Activated CD4-positive, alpha-beta T cell treated with anti-CD3 and anti-CD28 coated beads for 36 hours (primary cell): ENCODE measurements at regions of chr17 and their contacts with region 1.

Region 1: DNA sequence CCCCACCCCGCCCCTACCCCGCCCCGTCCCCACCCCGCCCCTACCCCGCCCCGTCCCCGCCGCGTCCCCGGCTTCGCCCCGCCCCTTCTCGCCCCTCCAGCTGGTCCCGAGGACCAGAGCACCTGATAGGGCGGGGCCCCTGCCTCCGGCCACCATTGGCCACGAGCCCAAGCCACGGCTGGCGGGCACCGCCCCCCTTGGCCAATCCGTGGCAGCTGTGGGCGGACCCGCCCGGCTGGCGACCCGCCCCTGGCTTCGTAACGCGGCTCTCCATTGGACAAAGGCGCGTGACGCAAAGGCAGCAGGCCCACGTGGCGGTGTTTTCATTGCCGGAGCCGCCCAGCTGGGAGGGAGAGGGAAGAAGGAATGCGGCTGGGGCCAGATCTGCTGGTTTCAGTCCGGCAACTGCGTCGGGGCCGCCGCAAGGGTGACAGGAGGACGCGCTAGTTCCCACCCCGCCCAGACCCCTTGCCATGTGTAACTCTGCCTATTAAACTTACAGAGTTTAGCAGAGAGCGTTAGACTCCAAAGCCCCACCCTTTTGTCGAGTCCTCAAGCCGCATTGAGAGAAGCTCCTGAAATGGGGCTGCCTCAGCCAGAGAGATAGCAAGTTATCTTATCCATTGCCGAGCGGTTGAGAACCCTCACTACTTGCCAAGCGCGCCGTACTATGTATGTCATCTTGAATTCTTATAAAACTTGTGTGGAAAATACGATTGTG is 403 bp upstream of the WIPI1 start:
- DNase-seq: peak; percentile 99
- ATAC-seq: peak; percentile 87
- H3K4me3 Mint-ChIP-seq: peak overlapping the region; percentile 64
- H3K27ac Mint-ChIP-seq: peak overlapping the region; percentile 64
- H3K4me1 Mint-ChIP-seq: peaks cover 61% of the 10 kb centered on the region
- H3K27me3 Mint-ChIP-seq: no peaks in the 10 kb centered on the region

Region 2: DNA sequence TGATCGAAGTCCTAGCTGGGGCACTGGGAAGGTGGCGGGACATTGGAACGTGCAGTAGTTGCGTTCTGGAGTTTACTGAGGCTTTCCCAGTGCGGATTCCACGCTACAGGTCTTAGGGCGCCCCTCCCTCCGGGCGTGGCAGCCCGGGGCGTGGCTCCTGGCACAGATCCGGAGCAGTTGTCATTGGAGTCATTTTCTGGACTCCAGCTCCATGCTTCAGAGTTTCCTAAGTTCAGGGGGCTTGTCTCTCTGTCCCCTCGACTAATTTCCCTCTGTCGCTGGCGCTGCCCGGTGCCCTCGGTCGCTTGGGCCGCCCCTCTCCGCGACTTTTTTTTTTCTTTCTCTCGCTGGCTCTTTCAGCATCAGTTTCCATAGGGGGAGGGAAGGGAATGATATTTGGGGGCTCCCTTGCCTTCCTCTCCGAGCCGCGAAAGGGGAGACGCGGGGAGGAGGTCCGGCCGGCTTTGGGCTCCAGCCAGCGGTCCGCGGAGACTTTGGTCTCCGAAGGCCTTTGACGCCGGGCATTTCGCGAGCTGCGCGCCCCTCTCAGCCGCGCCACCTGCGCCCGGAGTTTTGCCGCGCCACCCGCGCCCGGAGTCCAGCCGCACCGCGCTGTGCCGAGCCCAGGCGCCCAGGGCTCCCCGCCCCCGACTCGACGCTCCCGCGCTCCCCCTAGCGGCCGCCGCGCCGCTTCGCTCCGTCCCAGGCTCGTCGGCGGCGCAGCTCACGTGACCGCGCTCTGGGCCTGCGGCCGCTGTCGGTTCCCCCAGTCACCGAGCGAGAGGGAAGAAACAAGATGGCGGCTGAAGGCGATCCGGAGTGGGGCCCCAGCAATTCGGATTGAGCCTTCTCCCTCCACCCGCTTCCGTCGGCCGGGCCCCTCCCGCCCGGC is 632.7 kb before region 1 on chr17 and contains the start of gene BPTF:
- CTCF ChIA-PET with region 1: no interaction called
- POLR2A ChIA-PET with region 1: no interaction called
- intact Hi-C with region 1: loop called in 1 of 2 experiments (anchors 5 kb)
- DNase-seq: peak; percentile 95
- ATAC-seq: peak; percentile 88
- H3K4me3 Mint-ChIP-seq: peak within 1 kb of the TSS; percentile 99
- H3K27ac Mint-ChIP-seq: peak within 1 kb of the TSS; percentile 98
- H3K4me1 Mint-ChIP-seq: peaks cover 26% of the 10 kb centered on the region
- H3K27me3 Mint-ChIP-seq: peaks cover 5% of the 10 kb centered on the region
- total RNA-seq, gene BPTF: 77.6 to 109 TPM

Region 3: GRCh38 chr17:68057531-68057952 is 400.2 kb before region 1 on chr17:
- CTCF ChIA-PET with region 1: no interaction called
- POLR2A ChIA-PET with region 1: no interaction called
- intact Hi-C with region 1: loop called in 1 of 2 experiments (anchors 5 kb)
- DNase-seq: peak; percentile 62
- ATAC-seq: peak; percentile 88
- H3K4me3 Mint-ChIP-seq: no peak overlapping the region
- H3K27ac Mint-ChIP-seq: no peak overlapping the region
- H3K4me1 Mint-ChIP-seq: no peaks in the 10 kb centered on the region
- H3K27me3 Mint-ChIP-seq: no peaks in the 10 kb centered on the region

Region 4: GRCh38 chr17:68205251-68205807 is 252.4 kb before region 1 on chr17:
- CTCF ChIA-PET with region 1: interaction called, 4 read pairs
- POLR2A ChIA-PET with region 1: no interaction called
- intact Hi-C with region 1: loop called in 1 of 2 experiments (anchors 2 kb)
- DNase-seq: peak; percentile 96
- ATAC-seq: peak; percentile 87
- H3K4me3 Mint-ChIP-seq: peak overlapping the region; percentile 93
- H3K27ac Mint-ChIP-seq: peak overlapping the region; percentile 78
- H3K4me1 Mint-ChIP-seq: peaks cover 27% of the 10 kb centered on the region
- H3K27me3 Mint-ChIP-seq: peaks cover 7% of the 10 kb centered on the region

Region 5: DNA sequence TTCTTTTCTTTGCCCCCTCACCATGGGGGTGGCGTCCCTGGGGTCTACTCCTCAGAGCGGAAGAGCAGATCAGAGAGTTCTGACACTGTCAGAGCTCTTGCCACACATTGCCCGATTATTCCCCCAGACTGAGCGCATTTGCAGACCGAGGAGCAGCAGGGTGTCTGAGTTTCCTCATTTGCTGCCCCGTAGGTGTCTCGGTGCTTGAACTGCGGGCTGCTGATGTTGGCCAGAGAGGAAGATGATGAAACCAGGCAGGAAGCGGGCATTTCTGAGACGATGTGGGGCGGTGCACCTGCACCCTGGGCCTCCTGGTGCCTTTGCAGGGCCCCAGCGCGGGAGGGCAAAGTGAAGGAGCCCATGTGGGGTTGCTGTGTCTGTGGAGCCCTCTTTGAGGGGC is 111.3 kb before region 1 on chr17:
- CTCF ChIA-PET with region 1: no interaction called
- POLR2A ChIA-PET with region 1: no interaction called
- intact Hi-C with region 1: loop called in 1 of 2 experiments (anchors 5 kb)
- DNase-seq: peak; percentile 88
- ATAC-seq: peak; percentile 84
- H3K4me3 Mint-ChIP-seq: peak overlapping the region; percentile 79
- H3K27ac Mint-ChIP-seq: peak overlapping the region; percentile 100
- H3K4me1 Mint-ChIP-seq: peaks cover 67% of the 10 kb centered on the region
- H3K27me3 Mint-ChIP-seq: no peaks in the 10 kb centered on the region

Region 6: GRCh38 chr17:68491381-68492231 is 33.9 kb after region 1 on chr17:
- CTCF ChIA-PET with region 1: no interaction called
- POLR2A ChIA-PET with region 1: no interaction called
- intact Hi-C with region 1: no loop called
- DNase-seq: no peak
- ATAC-seq: no peak
- H3K4me3 Mint-ChIP-seq: no peak overlapping the region
- H3K27ac Mint-ChIP-seq: no peak overlapping the region
- H3K4me1 Mint-ChIP-seq: peaks cover 18% of the 10 kb centered on the region
- H3K27me3 Mint-ChIP-seq: peaks cover under 1% of the 10 kb centered on the region

Region 7: GRCh38 chr17:68512247-68512982 is 54.7 kb after region 1 on chr17 and contains the start of gene PRKAR1A:
- CTCF ChIA-PET with region 1: no interaction called
- POLR2A ChIA-PET with region 1: no interaction called
- intact Hi-C with region 1: loop called in 1 of 2 experiments (anchors 1 kb)
- DNase-seq: peak; percentile 95
- ATAC-seq: peak; percentile 92
- H3K4me3 Mint-ChIP-seq: peak within 1 kb of the TSS; percentile 93
- H3K27ac Mint-ChIP-seq: peak within 1 kb of the TSS; percentile 97
- H3K4me1 Mint-ChIP-seq: peaks cover 42% of the 10 kb centered on the region
- H3K27me3 Mint-ChIP-seq: no peaks in the 10 kb centered on the region
- total RNA-seq, gene PRKAR1A: 165 to 167 TPM

Region 8: GRCh38 chr17:68627956-68628575 is 170.4 kb after region 1 on chr17:
- CTCF ChIA-PET with region 1: no interaction called
- POLR2A ChIA-PET with region 1: no interaction called
- intact Hi-C with region 1: no loop called
- DNase-seq: no peak
- ATAC-seq: no peak
- H3K4me3 Mint-ChIP-seq: no peak overlapping the region
- H3K27ac Mint-ChIP-seq: no peak overlapping the region
- H3K4me1 Mint-ChIP-seq: no peaks in the 10 kb centered on the region
- H3K27me3 Mint-ChIP-seq: peaks cover 7% of the 10 kb centered on the region